Activated T-helper 1 cell treated with anti-CD3 and anti-CD28 coated beads, Interleukin-12 subunit alpha, Interleukin-12 subunit beta, Interleukin-2, Interleukin-4 antibody, amounts not matched to agents 30 ng/mL and 10 ng/mL and 1 ng/mL, durations not matched to agents 14 hours and 24 hours and 36 hours (primary cell): ENCODE measurements at regions of chr11 and their contacts with region 1.

Region 1: DNA sequence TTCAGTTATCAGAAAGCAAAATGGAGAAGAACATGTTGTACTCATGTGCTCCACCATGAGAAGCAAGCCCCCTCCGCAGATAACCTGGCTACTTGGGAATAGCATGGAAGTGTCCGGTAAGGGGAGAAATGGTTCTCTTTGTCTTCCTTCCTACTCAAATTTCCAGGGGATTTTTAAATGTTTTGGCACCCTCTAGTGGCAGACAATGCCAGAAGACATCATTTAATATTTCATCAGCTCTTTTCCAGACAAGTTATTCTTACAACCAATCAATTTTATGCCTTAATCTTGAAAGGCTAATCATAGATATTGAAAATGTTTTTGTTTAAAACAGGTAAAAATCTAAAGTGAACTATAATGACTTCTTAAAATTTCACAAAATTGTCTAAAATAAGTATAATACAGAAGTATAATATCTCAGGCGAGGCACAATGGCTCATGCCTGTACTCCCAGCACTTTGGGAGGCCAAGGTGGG is 15.7 kb downstream of the CRTAM start:
- DNase-seq: peak; percentile 15
- H3K4me3 Mint-ChIP-seq: no peak overlapping the region
- H3K27ac Mint-ChIP-seq: no peak overlapping the region
- H3K4me1 Mint-ChIP-seq: peaks cover 51% of the 10 kb centered on the region
- H3K27me3 Mint-ChIP-seq: peaks cover 13% of the 10 kb centered on the region

Region 2: GRCh38 chr11:121464352-121464946 is 1389.6 kb before region 1 on chr11:
- intact Hi-C with region 1: loop called (anchors 10 kb)
- DNase-seq: peak; percentile 66
- H3K4me3 Mint-ChIP-seq: peak overlapping the region; percentile 76
- H3K27ac Mint-ChIP-seq: peak overlapping the region; percentile 94
- H3K4me1 Mint-ChIP-seq: peaks cover 94% of the 10 kb centered on the region
- H3K27me3 Mint-ChIP-seq: peaks cover 2% of the 10 kb centered on the region

Region 3: DNA sequence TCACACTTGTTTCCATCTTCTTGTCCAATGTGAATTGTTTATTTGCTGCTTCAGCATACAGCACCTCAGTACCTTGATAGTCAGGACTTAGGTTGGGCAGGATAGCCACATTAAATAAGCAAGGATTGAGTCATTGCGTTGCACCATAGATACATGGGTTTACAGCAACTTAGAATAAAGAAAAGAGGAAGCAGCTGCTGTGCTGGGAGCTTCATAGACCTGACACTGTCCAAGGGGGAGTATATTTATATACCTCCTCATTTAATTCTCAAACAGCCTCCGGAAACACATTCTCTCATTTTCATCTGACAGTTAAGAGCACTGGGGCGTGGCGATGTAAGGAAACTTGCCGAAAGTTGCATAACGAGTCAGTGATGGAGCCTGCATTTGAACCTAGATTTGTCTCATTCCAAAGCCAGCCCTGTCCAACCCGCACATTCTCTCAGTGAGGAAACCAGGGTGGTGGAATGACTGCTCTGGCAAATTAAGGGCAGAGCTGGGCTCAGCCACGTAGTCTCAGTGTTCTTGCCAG is 156.3 kb before region 1 on chr11:
- intact Hi-C with region 1: loop called (anchors 1 kb)
- DNase-seq: peak; percentile 16
- H3K4me3 Mint-ChIP-seq: peak overlapping the region; percentile 70
- H3K27ac Mint-ChIP-seq: peak overlapping the region; percentile 78
- H3K4me1 Mint-ChIP-seq: peaks cover 45% of the 10 kb centered on the region
- H3K27me3 Mint-ChIP-seq: peaks cover 4% of the 10 kb centered on the region

Region 4: GRCh38 chr11:122743949-122744348 is 110.1 kb before region 1 on chr11:
- intact Hi-C with region 1: loop called (anchors 1 kb)
- DNase-seq: peak; percentile 75
- H3K4me3 Mint-ChIP-seq: no peak overlapping the region
- H3K27ac Mint-ChIP-seq: no peak overlapping the region
- H3K4me1 Mint-ChIP-seq: no peaks in the 10 kb centered on the region
- H3K27me3 Mint-ChIP-seq: peaks cover 18% of the 10 kb centered on the region

Region 5: DNA sequence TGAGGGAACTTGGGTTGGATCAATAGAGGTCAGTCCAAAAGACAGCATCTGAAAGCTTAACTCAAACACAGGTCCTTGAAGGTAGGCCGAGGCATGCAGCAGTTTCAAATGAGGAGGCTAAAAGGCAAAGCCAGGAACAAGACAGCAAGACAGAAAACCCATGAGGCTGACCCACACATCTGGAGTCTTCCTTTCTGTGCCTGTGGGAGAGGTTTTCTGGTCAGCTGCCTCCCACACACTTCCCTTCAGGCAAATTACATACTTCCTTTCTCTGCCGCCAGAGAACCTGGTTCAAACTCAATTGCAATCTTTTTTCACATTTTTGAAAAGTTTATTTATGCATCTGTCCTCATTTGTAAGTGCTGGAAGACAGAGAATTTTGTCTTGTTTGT is 45.5 kb before region 1 on chr11:
- intact Hi-C with region 1: loop called (anchors 1 kb)
- DNase-seq: no peak
- H3K4me3 Mint-ChIP-seq: peak overlapping the region; percentile 9
- H3K27ac Mint-ChIP-seq: peak overlapping the region; percentile 15
- H3K4me1 Mint-ChIP-seq: peaks cover 29% of the 10 kb centered on the region
- H3K27me3 Mint-ChIP-seq: peaks cover 2% of the 10 kb centered on the region

Region 6: DNA sequence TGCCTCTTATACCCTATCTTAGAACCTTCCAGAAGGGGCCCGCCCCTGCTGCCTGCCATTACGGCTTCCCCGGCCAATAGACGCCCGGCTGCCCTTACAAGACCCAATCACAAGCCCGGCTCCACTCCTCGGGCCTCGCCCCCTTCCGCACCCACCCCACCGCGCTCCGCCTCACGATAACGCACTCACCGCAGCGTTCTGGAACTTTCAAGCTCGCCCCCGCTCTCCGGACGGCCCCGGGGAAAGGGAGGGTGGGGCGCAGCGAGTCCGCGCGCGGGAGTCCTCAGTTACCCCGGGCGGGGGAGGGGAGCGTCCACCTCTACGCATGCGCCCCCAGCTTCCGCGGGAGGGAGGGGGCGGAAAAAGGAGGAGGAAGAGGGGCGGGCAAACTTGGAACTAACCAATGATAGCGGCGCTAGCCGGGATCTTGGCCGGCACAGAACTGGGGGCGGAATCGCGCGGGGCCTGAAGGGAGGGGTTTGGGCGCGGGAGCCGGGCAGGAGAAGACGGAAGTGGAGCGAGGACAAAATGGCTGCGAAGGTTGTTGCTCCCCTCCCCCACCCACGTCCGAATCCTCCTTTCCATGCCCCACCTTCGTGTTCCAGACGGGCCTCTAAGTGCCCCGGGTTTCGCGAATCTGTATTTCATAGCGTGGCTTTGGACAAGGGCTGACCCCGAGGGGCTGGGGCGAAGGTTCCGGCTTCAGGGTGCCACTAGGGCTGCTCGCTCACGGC is 208.3 kb after region 1 on chr11:
- intact Hi-C with region 1: loop called (anchors 1 kb)
- DNase-seq: peak; percentile 99
- H3K4me3 Mint-ChIP-seq: peak overlapping the region; percentile 98
- H3K27ac Mint-ChIP-seq: peak overlapping the region; percentile 100
- H3K4me1 Mint-ChIP-seq: peaks cover 43% of the 10 kb centered on the region
- H3K27me3 Mint-ChIP-seq: peaks cover 2% of the 10 kb centered on the region